ENCODE measurements at regions of chr10 and their contacts with region 1.

Region 1: DNA sequence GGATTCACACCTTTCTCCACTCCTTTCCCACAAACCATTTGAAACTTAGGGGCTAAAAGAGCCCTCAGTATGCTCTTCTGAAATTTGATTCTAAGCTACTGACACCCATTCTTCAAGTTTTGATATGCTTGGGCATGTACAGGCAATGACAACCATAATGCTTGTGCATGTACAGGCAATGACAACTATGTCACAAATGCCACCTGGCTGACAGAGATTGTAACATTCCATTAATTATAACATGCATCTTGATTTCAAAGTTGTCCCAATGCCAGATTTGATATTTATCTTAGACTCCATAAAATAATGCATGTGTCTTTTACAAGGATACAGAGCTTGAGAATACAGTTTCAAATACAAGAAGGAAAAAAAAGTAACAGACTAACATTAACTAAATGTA is 17.5 kb upstream of the CDK1 start:
- DNase-seq: no peak
- ATAC-seq: no peak
- H3K4me3 ChIP-seq: no peak overlapping the region
- H3K27ac ChIP-seq: no peak overlapping the region
- H3K4me1 ChIP-seq: peaks cover 3 to 11% of the 10 kb centered on the region in 2 experiments; a peak in 2 of 4 replicates
- H3K27me3 ChIP-seq: no peaks in the 10 kb centered on the region
- CTCF ChIP-seq: no peak
- POLR2A ChIP-seq: no peak
- RAD21 ChIP-seq: peak; percentile 16; the same call in 1 of the 2 replicates

Region 2: DNA sequence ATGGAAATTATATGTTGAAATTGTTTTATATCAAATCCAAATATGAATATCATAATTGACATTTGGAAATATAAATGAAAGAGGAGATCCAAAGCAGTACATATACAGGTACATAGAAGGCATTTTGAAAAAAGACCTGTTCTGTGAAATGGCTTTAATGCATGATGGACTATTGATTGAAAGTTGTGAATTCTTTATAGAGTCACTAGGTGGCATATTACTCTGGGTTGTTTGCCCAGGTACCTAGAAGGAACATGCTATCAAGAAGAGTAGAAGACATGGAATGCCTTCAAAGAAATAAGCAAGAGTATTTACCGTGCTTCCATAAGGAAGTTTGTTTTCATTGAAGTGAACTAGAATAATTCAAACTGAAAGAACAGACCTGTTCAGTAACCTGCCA is 211.1 kb before region 1 on chr10:
- CTCF ChIA-PET with region 1: no interaction called
- POLR2A ChIA-PET with region 1: no interaction called
- RAD21 ChIA-PET with region 1: no interaction called
- intact Hi-C with region 1: loop called (anchors 10 kb)
- DNase-seq: peak; percentile 28
- ATAC-seq: peak; percentile 89
- H3K4me3 ChIP-seq: no peak overlapping the region
- H3K27ac ChIP-seq: no peak overlapping the region
- H3K4me1 ChIP-seq: no peaks in the 10 kb centered on the region
- H3K27me3 ChIP-seq: no peaks in the 10 kb centered on the region
- CTCF ChIP-seq: peak; percentile 52 to 63 (median 62); a peak in 5 of 6 replicates
- POLR2A ChIP-seq: no peak
- RAD21 ChIP-seq: peak; percentile 74

Region 3: DNA sequence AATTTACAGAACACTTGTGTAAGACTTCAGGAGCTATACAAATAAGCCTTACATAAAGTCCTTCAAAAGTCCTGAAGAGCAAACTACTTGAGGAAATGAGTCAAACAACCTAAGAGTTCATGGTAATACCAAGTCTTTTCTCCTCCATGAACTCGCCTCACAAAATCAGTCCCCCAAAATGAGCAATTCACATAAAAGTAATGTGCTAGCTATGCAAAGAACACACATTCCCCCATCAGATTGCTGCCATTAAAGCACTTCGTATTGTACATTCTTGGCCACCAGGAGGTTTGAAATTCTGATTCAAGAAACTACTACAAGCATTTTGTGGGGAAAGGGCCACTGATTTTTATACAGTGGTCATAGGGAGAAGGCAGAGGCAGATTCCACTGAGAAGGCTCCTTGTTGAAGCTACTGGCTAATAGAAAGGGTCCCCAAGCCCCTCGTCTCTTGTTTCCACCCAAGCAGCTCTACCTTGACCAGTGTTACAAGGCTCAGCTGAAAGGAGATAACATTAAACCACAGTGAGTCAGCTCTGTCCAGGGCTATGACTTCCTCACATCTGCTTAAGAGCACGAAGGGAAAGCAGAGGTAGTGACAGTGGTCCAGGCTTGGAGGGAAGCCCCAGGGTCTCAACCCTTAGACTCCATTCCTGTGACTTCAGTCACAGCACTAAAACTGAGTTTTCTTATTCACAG is 97.7 kb before region 1 on chr10:
- CTCF ChIA-PET with region 1: no interaction called
- POLR2A ChIA-PET with region 1: no interaction called
- RAD21 ChIA-PET with region 1: no interaction called
- intact Hi-C with region 1: loop called (anchors 10 kb)
- DNase-seq: peak; percentile 7
- ATAC-seq: peak; percentile 71
- H3K4me3 ChIP-seq: peak overlapping the region in 1 of 2 experiments; percentile 4; a peak in 1 of 4 replicates
- H3K27ac ChIP-seq: no peak overlapping the region
- H3K4me1 ChIP-seq: peaks cover 29 to 50% of the 10 kb centered on the region in 2 experiments
- H3K27me3 ChIP-seq: no peaks in the 10 kb centered on the region
- CTCF ChIP-seq: peak in 2 of 3 experiments; percentile 26 to 30; a peak in 2 of 6 replicates
- POLR2A ChIP-seq: no peak
- RAD21 ChIP-seq: no peak

Region 4: DNA sequence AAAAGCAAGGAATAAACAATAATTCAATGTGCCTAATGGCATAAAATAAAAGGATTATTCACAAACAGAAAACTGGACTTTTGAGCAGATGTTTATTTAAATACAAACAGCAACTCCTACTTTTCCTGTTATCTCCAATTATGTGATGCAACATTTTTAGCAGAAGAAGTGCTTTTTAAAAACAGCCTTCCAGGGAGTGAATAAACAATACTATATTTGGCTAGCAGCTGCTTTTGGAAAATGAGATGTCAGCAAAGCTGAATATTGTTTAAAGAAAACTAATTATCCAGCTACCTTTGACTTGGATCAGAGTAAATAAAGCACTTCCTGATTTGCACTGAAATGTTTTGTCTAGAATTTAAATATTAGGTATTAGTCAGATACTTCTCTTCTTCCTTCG is 40.8 kb after region 1 on chr10:
- CTCF ChIA-PET with region 1: no interaction called
- POLR2A ChIA-PET with region 1: no interaction called
- RAD21 ChIA-PET with region 1: no interaction called
- intact Hi-C with region 1: no loop called
- DNase-seq: no peak
- ATAC-seq: no peak
- H3K4me3 ChIP-seq: no peak overlapping the region
- H3K27ac ChIP-seq: no peak overlapping the region
- H3K4me1 ChIP-seq: 0 out of 4 replicates have a peak, but pooled peaks cover 0 to 8% of the 10 kb centered on the region in 2 experiments
- H3K27me3 ChIP-seq: no peaks in the 10 kb centered on the region
- CTCF ChIP-seq: no peak
- POLR2A ChIP-seq: no peak
- RAD21 ChIP-seq: no peak

Measured in HCT116 (cell line).